ENCODE measurements at regions of chr3 and their contacts with region 1.

Region 1: DNA sequence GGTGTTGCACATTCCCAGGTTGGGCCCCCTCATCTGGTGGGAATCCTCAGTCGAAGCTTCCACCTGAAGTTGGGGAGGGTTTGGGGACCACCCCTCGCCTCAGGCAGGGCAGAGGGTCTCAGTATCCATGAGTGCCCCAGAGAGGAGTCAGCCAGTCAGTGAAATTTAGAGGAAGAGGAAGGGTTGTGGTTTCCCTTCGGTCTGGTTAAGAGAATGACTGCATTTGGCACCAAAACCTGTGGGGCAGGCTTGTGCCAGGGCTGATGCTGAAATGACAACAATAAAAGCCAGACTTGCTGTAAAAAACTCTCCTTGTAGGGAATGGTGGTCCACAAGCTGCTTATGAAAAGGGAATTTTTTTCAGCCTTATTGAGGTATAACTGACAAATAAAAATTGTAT is 22.6 kb downstream of the LMCD1 start:
- DNase-seq: no peak

Region 2: GRCh38 chr3:7546253-7546652 is 978.0 kb before region 1 on chr3:
- intact Hi-C with region 1: loop called in 1 of 2 experiments (anchors 5 kb)
- DNase-seq: no peak

Region 3: GRCh38 chr3:8490079-8490552 is 34.1 kb before region 1 on chr3:
- intact Hi-C with region 1: no loop called
- DNase-seq: no peak